Activated naive CD4-positive, alpha-beta T cell treated with anti-CD3 and anti-CD28 coated beads for 36 hours (primary cell): ENCODE measurements at regions of chr11 and their contacts with region 1.

Region 1: DNA sequence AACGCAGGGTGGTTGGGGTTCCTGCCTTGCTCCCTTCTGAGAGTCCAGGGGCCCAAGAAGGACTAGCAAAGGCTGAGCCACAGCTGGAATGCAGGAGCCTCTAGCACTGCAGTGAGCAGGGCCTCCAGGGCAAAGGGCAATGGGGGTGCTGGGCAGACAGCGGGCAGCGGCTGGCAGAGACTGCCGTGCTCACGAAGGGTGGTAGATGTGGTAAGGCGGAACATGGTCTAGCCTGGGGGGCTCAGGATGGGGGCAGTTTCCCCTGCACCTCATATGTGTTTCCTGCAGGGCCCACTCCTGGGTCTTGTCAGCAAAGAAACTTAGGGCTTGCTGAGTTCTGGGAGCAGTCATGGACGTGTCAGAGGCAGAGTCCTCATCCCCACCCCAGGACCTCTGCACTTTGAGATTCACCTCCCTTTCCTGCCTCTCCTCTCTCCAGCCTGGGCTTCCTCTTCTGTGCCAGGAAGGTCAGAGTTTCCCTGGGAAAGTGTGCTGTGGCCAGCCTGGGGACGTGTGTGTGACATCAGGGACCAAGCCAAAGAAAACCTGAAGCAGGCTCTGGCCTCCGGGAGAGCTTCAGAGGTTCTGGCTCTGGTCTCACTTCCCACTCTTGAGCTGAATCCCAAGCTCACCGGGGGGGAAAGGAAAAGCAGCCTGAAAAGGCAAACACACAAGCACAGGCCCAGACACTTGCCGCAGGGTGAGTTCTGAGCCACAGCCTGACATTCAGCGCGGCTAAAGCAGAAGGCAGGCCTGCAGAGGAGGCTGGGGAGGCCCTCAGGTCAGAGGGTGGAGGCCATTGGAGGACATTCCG is 4.4 kb downstream of the MOGAT2 start:
- DNase-seq: no peak
- H3K4me3 Mint-ChIP-seq: no peak overlapping the region
- H3K27ac Mint-ChIP-seq: no peak overlapping the region
- H3K4me1 Mint-ChIP-seq: no peaks in the 10 kb centered on the region
- H3K27me3 Mint-ChIP-seq: no peaks in the 10 kb centered on the region

Region 2: GRCh38 chr11:75625021-75625420 is 97.0 kb before region 1 on chr11:
- CTCF ChIA-PET with region 1: no interaction called
- intact Hi-C with region 1: no loop called
- DNase-seq: no peak
- H3K4me3 Mint-ChIP-seq: no peak overlapping the region
- H3K27ac Mint-ChIP-seq: no peak overlapping the region
- H3K4me1 Mint-ChIP-seq: no peaks in the 10 kb centered on the region
- H3K27me3 Mint-ChIP-seq: peaks cover 5% of the 10 kb centered on the region

Region 3: DNA sequence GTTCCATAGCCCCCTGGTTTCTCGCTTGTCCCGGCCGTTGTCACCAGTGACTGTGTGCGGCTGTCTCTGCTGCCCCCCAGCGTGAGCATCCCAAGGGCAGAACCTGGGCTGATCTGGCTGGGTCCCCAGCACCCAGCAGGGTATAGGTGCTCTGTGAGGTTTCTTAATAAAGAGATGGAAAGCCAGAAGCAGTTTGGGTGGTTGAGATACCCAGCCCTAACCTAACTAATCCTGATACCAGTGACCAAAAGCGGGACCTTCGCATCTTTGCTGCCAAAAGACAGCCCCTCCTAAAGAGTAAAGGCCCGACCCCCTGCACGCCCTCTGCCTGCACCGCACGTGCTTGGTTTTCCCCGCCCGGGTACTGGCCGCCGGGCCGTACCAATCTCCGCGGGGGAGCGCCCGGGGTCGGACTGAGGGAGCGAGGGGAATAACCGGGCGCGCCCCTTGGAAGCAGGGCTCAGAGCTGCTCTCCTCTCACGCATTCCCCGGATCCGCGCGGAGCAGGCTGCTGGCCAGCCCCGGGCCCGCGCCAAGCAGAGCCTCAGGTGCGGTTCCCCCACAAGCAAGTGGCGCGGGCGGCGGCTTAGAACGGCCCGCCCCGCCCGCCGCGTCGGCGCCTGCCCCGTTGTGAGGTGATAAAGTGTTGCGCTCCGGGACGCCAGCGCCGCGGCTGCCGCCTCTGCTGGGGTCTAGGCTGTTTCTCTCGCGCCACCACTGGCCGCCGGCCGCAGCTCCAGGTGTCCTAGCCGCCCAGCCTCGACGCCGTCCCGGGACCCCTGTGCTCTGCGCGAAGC is 46.2 kb after region 1 on chr11 and contains the start of gene DGAT2:
- CTCF ChIA-PET with region 1: interaction called, 3 read pairs
- intact Hi-C with region 1: loop called (anchors 1 kb)
- DNase-seq: peak; percentile 77
- H3K4me3 Mint-ChIP-seq: peak within 1 kb of the TSS; percentile 64
- H3K27ac Mint-ChIP-seq: no peak within 1 kb of the TSS
- H3K4me1 Mint-ChIP-seq: peaks cover 24% of the 10 kb centered on the region
- H3K27me3 Mint-ChIP-seq: peaks cover 4% of the 10 kb centered on the region
- total RNA-seq, gene DGAT2: 3.4 to 4.2 TPM

Region 4: DNA sequence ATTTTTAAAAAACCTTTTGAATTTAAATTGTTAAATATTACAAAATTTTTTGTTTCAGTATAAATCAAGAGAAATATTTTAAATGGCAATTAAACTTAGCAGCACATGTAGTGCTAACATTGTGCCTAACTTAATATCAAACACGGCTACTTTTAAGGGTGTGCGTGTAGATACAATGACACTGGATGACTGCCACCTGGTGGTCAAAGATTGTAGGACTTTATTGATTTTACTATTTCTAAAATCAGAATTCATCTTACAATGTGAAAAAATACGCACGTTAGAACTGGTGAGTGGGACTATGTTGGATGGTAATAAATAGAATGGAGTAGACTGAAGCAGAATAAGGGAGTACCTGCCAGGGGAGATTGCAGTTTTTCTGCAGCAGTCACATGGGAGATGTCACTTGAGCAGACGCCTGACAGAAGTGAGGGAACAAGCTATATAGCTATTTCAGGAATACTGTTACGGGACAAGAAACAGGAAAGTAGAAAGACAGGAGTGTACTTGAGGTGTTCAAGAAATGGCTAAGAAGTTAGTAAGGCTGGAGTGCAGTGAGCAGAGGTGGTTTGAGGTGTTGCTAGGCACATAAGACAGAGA is 145.8 kb after region 1 on chr11:
- CTCF ChIA-PET with region 1: interaction called, 6 read pairs
- intact Hi-C with region 1: loop called (anchors 1 kb)
- DNase-seq: peak; percentile 61
- H3K4me3 Mint-ChIP-seq: no peak overlapping the region
- H3K27ac Mint-ChIP-seq: no peak overlapping the region
- H3K4me1 Mint-ChIP-seq: peaks cover 8% of the 10 kb centered on the region
- H3K27me3 Mint-ChIP-seq: no peaks in the 10 kb centered on the region